Caco-2 (cell line): ENCODE measurements at regions of chr10 and their contacts with region 1.

Region 1: DNA sequence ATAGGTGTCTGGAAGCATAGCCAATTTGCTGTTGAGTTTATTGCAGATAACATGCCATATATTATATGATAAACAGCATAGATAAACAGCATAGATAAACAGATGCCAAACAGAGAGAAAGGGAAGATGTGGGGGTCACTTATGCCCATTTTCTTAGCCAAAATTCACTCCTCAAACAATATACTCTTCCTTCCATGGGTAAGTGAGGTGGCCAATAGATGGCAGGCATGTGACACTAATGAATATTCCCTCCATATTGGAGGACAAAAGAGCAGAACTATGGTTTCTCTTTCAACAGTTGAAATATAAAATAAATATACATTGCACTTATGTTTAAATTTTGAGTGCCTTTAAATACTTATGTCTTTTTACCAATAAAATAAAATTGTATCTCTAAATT is 1212.8 kb downstream of the REEP3 start:
- DNase-seq: peak; percentile 49 to 73
- H3K4me3 ChIP-seq: no peak overlapping the region
- H3K4me3 Mint-ChIP-seq: no peak overlapping the region
- H3K27ac Mint-ChIP-seq: no peak overlapping the region
- H3K4me1 ChIP-seq: peaks cover 19% of the 10 kb centered on the region
- H3K4me1 Mint-ChIP-seq: peaks cover 11% of the 10 kb centered on the region
- H3K27me3 ChIP-seq: no peaks in the 10 kb centered on the region
- H3K27me3 Mint-ChIP-seq: no peaks in the 10 kb centered on the region
- CTCF ChIP-seq: peak; percentile 73 to 77

Region 2: GRCh38 chr10:64041185-64041988 is 692.6 kb before region 1 on chr10:
- CTCF ChIA-PET with region 1: no interaction called
- POLR2A ChIA-PET with region 1: no interaction called
- intact Hi-C with region 1: loop called (anchors 5 kb)
- DNase-seq: peak; percentile 84 to 90
- H3K4me3 ChIP-seq: no peak overlapping the region
- H3K4me3 Mint-ChIP-seq: no peak overlapping the region
- H3K27ac Mint-ChIP-seq: no peak overlapping the region
- H3K4me1 ChIP-seq: no peaks in the 10 kb centered on the region
- H3K4me1 Mint-ChIP-seq: no peaks in the 10 kb centered on the region
- H3K27me3 ChIP-seq: no peaks in the 10 kb centered on the region; the same call in 1 of the 2 replicates
- H3K27me3 Mint-ChIP-seq: peaks cover 6% of the 10 kb centered on the region
- CTCF ChIP-seq: peak; percentile 100

Region 3: GRCh38 chr10:64708884-64709681 is 24.9 kb before region 1 on chr10:
- CTCF ChIA-PET with region 1: no interaction called
- POLR2A ChIA-PET with region 1: no interaction called
- intact Hi-C with region 1: no loop called
- DNase-seq: no peak
- H3K4me3 ChIP-seq: no peak overlapping the region
- H3K4me3 Mint-ChIP-seq: no peak overlapping the region
- H3K27ac Mint-ChIP-seq: no peak overlapping the region
- H3K4me1 ChIP-seq: no peaks in the 10 kb centered on the region
- H3K4me1 Mint-ChIP-seq: no peaks in the 10 kb centered on the region
- H3K27me3 ChIP-seq: no peaks in the 10 kb centered on the region
- H3K27me3 Mint-ChIP-seq: peaks cover 3% of the 10 kb centered on the region
- CTCF ChIP-seq: no peak

Region 4: DNA sequence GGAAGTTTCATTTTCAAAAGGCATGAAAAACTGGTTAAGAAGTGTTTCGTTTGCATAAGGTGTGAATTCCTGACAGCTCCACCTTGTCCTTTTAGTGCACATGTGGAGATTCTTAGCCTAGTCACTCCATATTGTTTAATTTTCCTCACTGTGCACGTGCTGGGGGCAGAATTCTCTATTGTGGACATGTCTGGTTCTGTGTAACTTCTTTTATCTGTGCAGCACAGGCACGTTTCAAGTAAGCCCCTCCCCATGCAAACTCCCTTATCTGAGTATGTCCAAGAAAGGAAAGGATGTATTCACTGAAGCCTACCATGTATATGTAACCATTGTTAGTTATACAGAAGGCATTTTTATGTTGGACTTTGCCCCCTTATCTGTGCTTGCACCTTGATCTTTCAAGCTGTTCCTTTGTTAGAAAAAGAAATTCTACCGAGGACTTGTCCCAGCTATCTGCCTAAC is 133.6 kb after region 1 on chr10:
- CTCF ChIA-PET with region 1: no interaction called
- POLR2A ChIA-PET with region 1: no interaction called
- intact Hi-C with region 1: loop called (anchors 2 kb)
- DNase-seq: peak; percentile 94
- H3K4me3 ChIP-seq: no peak overlapping the region
- H3K4me3 Mint-ChIP-seq: peak overlapping the region; percentile 25
- H3K27ac Mint-ChIP-seq: peak overlapping the region; percentile 79
- H3K4me1 ChIP-seq: peaks cover 35% of the 10 kb centered on the region
- H3K4me1 Mint-ChIP-seq: peaks cover 40% of the 10 kb centered on the region
- H3K27me3 ChIP-seq: no peaks in the 10 kb centered on the region
- H3K27me3 Mint-ChIP-seq: no peaks in the 10 kb centered on the region
- CTCF ChIP-seq: no peak

Region 5: DNA sequence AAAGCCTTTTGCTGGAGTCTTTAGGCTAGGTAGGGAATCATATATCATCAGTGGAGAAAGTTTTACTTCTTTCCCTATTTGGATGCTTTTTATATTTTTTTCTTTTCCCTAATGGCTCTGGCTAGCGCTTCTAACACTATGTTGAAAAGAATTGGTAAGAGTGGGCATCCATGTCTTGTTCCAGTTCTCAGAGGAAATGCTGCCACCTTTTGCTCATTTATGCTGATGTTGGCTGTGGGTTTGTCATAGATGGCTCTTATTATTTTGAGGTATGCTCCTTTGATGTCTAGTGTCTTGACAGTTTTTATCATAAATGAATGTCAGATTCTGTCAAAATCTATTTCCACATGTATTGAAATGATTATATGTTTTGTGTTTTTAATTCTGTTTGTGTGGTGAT is 331.3 kb after region 1 on chr10:
- CTCF ChIA-PET with region 1: no interaction called
- POLR2A ChIA-PET with region 1: no interaction called
- intact Hi-C with region 1: loop called (anchors 1 kb)
- DNase-seq: peak in 1 of 2 experiments; percentile 46
- H3K4me3 ChIP-seq: no peak overlapping the region
- H3K4me3 Mint-ChIP-seq: no peak overlapping the region
- H3K27ac Mint-ChIP-seq: no peak overlapping the region
- H3K4me1 ChIP-seq: no peaks in the 10 kb centered on the region
- H3K4me1 Mint-ChIP-seq: no peaks in the 10 kb centered on the region
- H3K27me3 ChIP-seq: no peaks in the 10 kb centered on the region
- H3K27me3 Mint-ChIP-seq: no peaks in the 10 kb centered on the region
- CTCF ChIP-seq: peak; percentile 18 to 37

Region 6: GRCh38 chr10:65358565-65358964 is 624.6 kb after region 1 on chr10:
- CTCF ChIA-PET with region 1: no interaction called
- POLR2A ChIA-PET with region 1: no interaction called
- intact Hi-C with region 1: loop called (anchors 2 kb)
- DNase-seq: peak; percentile 63 to 66
- H3K4me3 ChIP-seq: no peak overlapping the region
- H3K4me3 Mint-ChIP-seq: no peak overlapping the region
- H3K27ac Mint-ChIP-seq: no peak overlapping the region
- H3K4me1 ChIP-seq: no peaks in the 10 kb centered on the region
- H3K4me1 Mint-ChIP-seq: no peaks in the 10 kb centered on the region
- H3K27me3 ChIP-seq: no peaks in the 10 kb centered on the region
- H3K27me3 Mint-ChIP-seq: no peaks in the 10 kb centered on the region
- CTCF ChIP-seq: peak; percentile 84 to 93

Region 7: DNA sequence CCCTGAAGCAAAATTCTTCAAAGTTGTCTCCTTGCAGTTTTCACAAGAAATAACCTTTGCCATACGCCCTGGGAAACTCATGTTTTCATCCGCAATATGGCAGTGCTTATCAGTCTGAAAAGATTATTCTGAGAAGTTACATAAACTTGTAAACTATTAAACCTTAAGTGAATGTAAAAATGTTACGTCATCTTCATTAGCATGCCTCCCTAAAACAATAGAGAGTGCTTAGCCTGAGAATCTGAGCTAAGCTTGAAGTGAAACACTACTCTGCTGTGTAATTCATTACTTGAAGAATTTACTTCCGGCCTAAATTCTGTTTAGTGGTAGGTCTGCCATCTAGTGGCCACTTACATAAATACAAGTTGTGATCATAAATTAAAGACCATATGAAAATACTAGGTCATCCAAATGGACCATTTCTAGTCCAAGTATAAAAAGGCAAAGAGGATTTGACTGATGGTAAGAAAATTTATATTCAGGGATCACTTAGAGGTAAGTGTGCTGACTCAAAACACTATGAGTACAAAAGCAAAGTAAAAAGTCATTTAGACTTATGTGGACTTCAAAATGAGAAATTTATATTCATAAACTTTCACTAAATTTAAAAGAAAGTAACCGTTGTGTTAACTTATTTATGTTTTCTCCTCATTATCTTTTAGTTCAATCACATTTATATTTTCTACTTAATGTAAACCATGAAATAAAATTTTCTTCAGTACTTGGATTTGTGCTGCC is 1446.8 kb after region 1 on chr10:
- CTCF ChIA-PET with region 1: no interaction called
- POLR2A ChIA-PET with region 1: no interaction called
- intact Hi-C with region 1: loop called (anchors 1 kb)
- DNase-seq: peak in 1 of 2 experiments; percentile 73
- H3K4me3 ChIP-seq: no peak overlapping the region
- H3K4me3 Mint-ChIP-seq: no peak overlapping the region
- H3K27ac Mint-ChIP-seq: no peak overlapping the region
- H3K4me1 ChIP-seq: no peaks in the 10 kb centered on the region
- H3K4me1 Mint-ChIP-seq: no peaks in the 10 kb centered on the region
- H3K27me3 ChIP-seq: no peaks in the 10 kb centered on the region
- H3K27me3 Mint-ChIP-seq: no peaks in the 10 kb centered on the region
- CTCF ChIP-seq: peak; percentile 73 to 89